ENCODE measurements at regions of chr5 and their contacts with region 1.

Region 1: GRCh38 chr5:68287976-68288706 is 72.6 kb downstream of the PIK3R1 start:
- DNase-seq: peak; percentile 86

Region 2: DNA sequence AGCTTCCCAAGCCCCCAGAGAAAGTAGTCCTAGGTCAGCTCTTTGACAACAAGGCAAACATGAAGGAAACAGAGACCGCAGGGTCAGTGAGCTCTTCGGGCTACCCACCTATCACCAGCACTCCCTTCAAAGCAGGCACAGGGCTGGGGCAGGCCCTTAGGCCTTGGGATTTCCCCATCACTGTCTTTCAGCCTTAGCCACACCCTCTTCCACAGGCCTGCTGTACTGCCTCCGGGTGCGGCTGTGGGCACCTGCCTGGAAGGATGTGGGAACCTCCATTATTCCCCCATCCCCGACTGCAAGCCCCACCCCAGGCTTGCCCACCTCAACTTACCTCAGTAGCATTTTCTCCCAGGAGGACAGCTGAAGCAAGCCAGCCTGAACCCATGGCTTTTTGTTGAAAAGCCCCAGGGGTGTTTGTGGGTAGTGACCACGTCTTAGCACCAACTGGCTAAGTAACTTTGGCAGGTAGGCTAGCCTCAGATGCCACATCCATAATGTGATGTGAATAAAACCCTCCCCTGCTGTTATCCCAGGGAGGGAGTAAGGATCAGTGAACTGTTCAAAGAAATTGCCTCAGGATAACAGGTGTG is 27.6 kb after region 1 on chr5:
- intact Hi-C with region 1: no loop called
- DNase-seq: no peak

Region 3: GRCh38 chr5:68343421-68343826 is 55.3 kb after region 1 on chr5:
- intact Hi-C with region 1: loop called (anchors 5 kb)
- DNase-seq: no peak

Region 4: DNA sequence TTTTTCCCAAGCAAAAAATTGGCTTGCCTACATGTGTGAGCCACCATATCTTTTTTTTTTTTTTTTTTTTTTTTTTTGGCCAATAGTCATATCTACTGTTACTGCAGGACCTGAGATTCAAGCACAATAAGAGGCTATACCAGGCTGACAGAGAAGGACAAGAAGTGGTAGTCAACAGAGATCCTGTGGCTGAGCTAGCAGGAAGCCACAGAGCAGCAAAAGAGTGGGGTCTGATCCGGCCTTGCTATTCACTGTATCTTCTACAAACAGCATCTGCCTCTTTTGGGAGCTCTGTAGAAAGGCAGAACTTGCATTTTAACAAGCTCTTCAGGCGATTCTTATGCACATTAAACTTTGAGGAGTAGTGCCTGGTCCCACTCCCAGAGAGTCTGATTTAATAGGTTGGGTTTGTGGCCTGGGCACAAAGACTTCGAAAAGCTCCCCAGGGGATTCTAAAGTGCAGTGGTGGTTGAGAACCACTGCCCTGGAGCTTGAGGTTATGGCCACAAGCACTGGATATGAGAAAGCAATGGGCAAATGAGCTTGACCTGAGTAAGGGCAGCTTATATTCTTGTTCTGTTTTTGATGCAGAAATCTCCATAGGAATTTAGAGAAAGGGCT is 90.2 kb after region 1 on chr5:
- intact Hi-C with region 1: no loop called
- DNase-seq: no peak

Region 5: DNA sequence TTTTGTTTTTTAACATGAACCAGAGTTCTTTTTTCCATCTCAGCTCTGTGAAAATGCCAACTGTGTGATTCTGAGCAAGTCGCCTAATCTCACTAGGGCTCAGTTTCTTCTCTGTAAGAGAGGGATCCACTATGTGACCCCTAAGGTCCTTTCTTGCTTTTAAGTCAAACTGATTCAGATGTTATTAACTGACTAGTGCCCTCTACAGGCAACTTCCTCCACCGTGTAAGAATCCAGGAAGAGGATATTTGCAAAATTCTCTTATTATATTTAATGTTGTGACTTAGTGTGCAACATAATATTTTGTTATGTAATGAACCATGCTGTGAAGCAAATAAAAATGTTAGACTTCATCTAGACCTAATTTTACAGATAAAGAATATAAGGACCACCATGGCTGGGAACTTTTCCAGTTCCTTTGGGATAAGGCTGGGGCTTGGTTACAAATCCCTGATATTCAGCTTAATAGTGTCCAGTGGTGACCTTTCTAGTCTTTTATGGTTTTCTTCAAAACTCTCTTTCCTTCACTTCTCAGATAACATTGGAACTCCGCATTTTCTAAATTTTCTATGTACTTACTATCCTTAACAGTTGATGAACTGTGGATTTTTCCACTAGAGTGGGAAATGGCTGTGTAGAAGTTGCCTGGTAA is 172.1 kb after region 1 on chr5:
- intact Hi-C with region 1: loop called (anchors 1 kb)
- DNase-seq: no peak

Region 6: GRCh38 chr5:68661237-68661636 is 373.1 kb after region 1 on chr5:
- intact Hi-C with region 1: loop called (anchors 5 kb)
- DNase-seq: no peak

Region 7: GRCh38 chr5:68962757-68963484 is 674.8 kb after region 1 on chr5:
- intact Hi-C with region 1: loop called (anchors 2 kb)
- DNase-seq: no peak